OCI-LY7 (cell line): ENCODE measurements at regions of chr17 and their contacts with region 1.

Region 1: GRCh38 chr17:41308251-41308917 is 725 bp downstream of the KRTAP16-1 start:
- DNase-seq: peak; percentile 55
- H3K4me3 ChIP-seq: no peak overlapping the region
- H3K27ac ChIP-seq: no peak overlapping the region
- H3K4me1 ChIP-seq: peaks cover 10% of the 10 kb centered on the region
- CTCF ChIP-seq: no peak

Region 2: DNA sequence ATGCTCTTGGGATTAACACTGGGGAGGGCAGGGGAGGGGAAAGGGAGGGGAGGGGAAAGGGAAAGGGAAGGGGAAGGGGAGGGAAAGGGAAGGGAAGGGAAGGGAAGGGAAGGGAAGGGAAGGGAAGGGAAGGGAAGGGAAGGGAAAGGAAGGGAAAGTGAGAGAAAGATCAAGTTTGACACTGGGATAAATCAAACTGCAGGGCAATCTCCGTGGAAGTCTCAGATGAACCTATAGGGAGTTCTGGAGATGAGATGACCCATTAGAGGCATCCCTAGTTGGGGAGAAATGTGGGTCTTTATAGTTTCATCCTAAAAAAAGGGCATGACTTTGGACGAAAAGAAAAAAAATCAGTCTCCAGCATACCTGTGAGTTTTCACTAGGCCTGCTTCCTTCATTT is 186.6 kb before region 1 on chr17:
- CTCF ChIA-PET with region 1: no interaction called
- POLR2A ChIA-PET with region 1: no interaction called
- intact Hi-C with region 1: loop called (anchors 5 kb)
- DNase-seq: no peak
- H3K4me3 ChIP-seq: no peak overlapping the region
- H3K27ac ChIP-seq: no peak overlapping the region
- H3K4me1 ChIP-seq: peaks cover 16% of the 10 kb centered on the region
- CTCF ChIP-seq: no peak

Region 3: GRCh38 chr17:41167561-41167960 is 140.8 kb before region 1 on chr17:
- CTCF ChIA-PET with region 1: no interaction called
- POLR2A ChIA-PET with region 1: no interaction called
- intact Hi-C with region 1: no loop called
- DNase-seq: no peak
- H3K4me3 ChIP-seq: no peak overlapping the region
- H3K27ac ChIP-seq: no peak overlapping the region
- H3K4me1 ChIP-seq: no peaks in the 10 kb centered on the region
- CTCF ChIP-seq: no peak